A549 (cell line): ENCODE measurements at regions of chr15 and their contacts with region 1.

Region 1: GRCh38 chr15:41811432-41812195 is 16.3 kb upstream of the JMJD7 start:
- DNase-seq: peak; percentile 70 to 71
- ATAC-seq: peak; percentile 96 to 98; a peak in 5 of 6 replicates
- H3K4me3 ChIP-seq: no peak overlapping the region
- H3K27ac ChIP-seq: no peak overlapping the region
- H3K4me1 ChIP-seq: no peaks in the 10 kb centered on the region
- CTCF ChIP-seq: peak; percentile 69
- EP300 ChIP-seq: no peak
- POLR2A ChIP-seq: no peak
- RAD21 ChIP-seq: peak; percentile 82 to 92

Region 2: DNA sequence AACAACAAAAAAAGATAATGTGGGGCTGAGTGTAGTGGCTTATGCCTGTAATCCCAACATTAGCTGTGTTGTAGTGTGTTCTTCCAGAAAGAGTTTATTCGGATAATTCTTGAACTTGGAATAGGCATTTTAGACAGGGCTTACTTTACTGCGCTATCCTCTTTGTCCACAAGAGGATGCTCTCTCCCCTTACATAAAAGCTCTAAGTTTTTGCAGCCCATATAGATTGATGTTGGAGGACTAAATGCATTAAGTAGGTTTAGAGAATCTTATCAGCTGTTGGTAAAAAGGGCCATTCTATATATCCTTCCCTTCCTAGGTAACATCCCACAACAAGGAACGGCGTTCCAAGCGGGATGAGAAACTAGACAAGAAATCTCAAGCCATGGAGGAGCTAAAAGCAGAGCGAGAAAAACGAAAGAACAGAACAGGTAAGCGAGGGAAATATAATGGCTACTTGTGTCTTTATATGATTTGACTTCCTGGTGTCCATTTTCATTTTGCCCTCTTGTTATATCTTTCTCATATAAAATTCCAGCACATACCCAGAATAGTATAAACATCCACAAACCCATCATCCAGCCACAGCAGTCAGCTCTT is 345.7 kb before region 1 on chr15:
- CTCF ChIA-PET with region 1: interaction called, 26 read pairs
- POLR2A ChIA-PET with region 1: no interaction called
- DNase-seq: peak; percentile 31 to 56
- ATAC-seq: peak; percentile 59 to 77; a peak in 5 of 6 replicates
- H3K4me3 ChIP-seq: no peak overlapping the region
- H3K27ac ChIP-seq: no peak overlapping the region
- H3K4me1 ChIP-seq: no peaks in the 10 kb centered on the region
- CTCF ChIP-seq: peak; percentile 80
- EP300 ChIP-seq: no peak
- POLR2A ChIP-seq: no peak
- RAD21 ChIP-seq: peak; percentile 76 to 83

Region 3: DNA sequence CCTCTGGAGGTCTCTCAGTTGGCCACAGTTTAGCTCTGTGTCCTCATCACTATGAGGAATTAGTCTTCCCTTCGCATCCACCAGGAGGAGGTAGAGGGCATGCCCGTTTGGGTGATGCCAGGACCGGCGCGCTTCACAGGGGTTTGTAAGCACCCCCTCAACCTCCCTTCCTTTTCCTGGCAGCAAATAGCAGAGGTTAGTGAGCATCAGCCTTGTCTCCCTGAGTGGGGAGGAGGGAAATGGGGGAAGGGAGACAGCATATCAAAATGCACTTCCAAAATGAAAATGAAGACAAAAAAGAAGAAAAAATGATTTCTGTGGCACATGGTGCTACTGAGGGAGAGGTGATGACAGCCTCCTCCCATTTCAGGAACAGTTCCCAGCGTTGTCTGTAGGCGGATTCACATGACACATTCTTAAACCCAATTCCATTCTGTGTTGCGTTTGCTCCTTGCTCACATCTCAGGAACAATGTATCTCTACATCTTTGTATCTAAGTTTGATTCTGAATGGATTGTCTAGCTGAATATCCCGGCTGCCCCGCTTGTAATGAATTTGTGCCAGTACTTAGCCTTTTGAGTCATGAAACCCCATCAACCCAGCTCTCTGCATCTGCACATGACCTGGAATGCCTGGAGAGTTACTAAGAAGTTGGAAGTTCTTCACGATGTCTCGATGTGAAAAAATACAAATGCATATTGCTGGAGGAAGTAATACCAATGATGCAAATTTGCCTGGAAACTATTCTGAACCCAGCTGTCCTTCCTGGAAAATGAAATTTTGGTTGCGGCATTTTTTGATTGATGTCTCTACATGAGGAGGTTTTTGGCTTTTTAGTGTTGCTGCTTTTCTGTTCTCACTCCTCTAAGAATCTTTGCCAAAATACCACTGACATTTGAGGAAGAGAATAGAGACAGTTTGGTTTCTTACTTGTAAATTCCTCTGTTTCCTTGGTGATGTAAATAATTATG is 207.4 kb before region 1 on chr15:
- CTCF ChIA-PET with region 1: interaction called, 34 read pairs
- POLR2A ChIA-PET with region 1: no interaction called
- DNase-seq: peak; percentile 73 to 76
- ATAC-seq: peak; percentile 98 to 99
- H3K4me3 ChIP-seq: peak overlapping the region; percentile 32; the same call in 2 of the 3 replicates
- H3K27ac ChIP-seq: peak overlapping the region in 1 of 2 experiments; percentile 59; a peak in 3 of 6 replicates
- H3K4me1 ChIP-seq: peaks cover 5% of the 10 kb centered on the region; the same call in 1 of the 3 replicates
- CTCF ChIP-seq: peak; percentile 64
- EP300 ChIP-seq: no peak
- POLR2A ChIP-seq: no peak
- RAD21 ChIP-seq: peak; percentile 52 to 64; a peak in 4 of 5 replicates

Region 4: DNA sequence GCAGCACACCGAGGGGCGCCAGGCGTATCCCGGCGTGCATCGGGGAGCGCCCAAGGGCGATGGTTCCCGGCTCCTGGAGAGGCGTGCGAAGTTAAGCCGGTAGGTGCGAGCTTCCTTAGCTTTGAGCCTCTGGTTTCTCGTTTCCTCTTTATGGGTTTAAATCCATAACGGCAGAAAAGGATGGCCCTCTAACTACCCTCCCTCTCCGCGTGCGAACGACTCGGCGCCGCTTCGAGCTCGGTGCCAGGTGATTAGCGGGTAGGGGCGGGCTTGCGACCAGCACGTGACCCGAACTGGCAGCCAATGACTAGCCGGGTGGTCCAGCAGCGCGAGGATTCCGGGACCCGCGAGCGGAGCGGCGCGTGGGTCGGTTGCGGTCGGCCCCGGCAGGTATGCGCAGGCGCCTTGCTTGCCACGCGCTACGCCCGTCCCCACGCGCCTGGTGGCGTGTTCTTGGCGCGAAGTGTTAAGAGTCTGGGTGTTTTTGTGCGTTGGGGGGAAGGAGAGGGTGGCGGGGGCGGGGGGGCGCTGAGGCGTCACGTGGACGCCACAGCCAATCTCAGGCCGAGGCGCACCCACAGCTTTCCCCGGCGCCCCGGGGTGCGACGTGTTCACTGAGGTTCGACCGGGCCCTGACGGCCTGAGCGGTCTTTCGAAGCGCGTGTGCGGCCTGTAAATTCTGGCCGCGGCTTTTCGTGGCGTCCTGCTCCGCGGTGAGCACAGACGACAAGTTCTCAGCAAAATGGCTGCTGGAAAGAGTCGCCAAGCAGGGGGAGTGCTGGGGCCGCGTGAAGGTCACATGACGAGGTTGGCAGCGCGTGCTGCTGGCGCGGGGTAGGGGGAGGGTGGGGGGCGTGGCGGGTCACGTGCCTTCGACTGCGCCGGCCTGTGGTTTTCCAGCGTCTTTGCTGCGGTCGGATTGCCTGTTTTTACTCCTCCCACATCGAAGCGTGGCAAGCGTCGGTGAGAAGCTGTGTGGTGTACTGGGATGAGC is 190.1 kb before region 1 on chr15:
- CTCF ChIA-PET with region 1: no interaction called
- POLR2A ChIA-PET with region 1: no interaction called
- DNase-seq: peak; percentile 89 to 93
- ATAC-seq: peak; percentile 93 to 94
- H3K4me3 ChIP-seq: peak overlapping the region; percentile 58
- H3K27ac ChIP-seq: peak overlapping the region; percentile 98
- H3K4me1 ChIP-seq: 0 out of 3 replicates have a peak, but pooled peaks cover 3% of the 10 kb centered on the region
- CTCF ChIP-seq: no peak
- EP300 ChIP-seq: no peak
- POLR2A ChIP-seq: peak; percentile 44
- RAD21 ChIP-seq: no peak

Region 5: GRCh38 chr15:41782371-41783282 is 29.0 kb before region 1 on chr15:
- CTCF ChIA-PET with region 1: interaction called, 103 read pairs
- POLR2A ChIA-PET with region 1: no interaction called
- DNase-seq: no peak
- ATAC-seq: no peak
- H3K4me3 ChIP-seq: no peak overlapping the region
- H3K27ac ChIP-seq: no peak overlapping the region
- H3K4me1 ChIP-seq: no peaks in the 10 kb centered on the region
- CTCF ChIP-seq: no peak
- EP300 ChIP-seq: no peak
- POLR2A ChIP-seq: no peak
- RAD21 ChIP-seq: no peak

Region 6: GRCh38 chr15:41832875-41833274 is 21.3 kb after region 1 on chr15:
- CTCF ChIA-PET with region 1: interaction called, 12 read pairs
- POLR2A ChIA-PET with region 1: no interaction called
- DNase-seq: no peak
- ATAC-seq: no peak
- H3K4me3 ChIP-seq: no peak overlapping the region
- H3K27ac ChIP-seq: no peak overlapping the region
- H3K4me1 ChIP-seq: 0 out of 3 replicates have a peak, but pooled peaks cover 4% of the 10 kb centered on the region
- CTCF ChIP-seq: no peak
- EP300 ChIP-seq: no peak
- POLR2A ChIP-seq: no peak
- RAD21 ChIP-seq: no peak